ENCODE measurements at regions of chr7 and their contacts with region 1.

Region 1: DNA sequence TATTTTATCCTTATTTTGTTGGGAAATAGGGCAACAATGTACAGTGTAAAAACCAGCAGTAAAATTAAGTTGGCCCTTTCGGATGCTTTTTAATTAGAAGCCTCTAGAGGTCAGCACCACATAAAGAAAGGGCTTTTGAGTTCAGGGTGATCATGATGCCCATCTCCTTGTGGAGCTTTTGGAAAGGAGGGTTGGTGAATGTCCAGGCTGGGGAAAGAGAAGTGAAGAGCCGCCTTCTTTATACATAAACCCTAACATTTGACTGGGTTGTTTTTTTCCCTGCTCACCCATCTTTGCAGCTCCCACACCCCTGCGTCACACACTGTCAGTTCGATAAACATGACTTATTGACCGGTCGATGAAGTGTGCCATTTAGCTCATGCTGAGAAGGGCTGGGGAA is 29.8 kb downstream of the MTURN start:
- DNase-seq: no peak
- ATAC-seq: peak; percentile 47 to 71 (median 62)
- H3K4me3 ChIP-seq: no peak overlapping the region
- H3K27ac ChIP-seq: no peak overlapping the region
- H3K4me1 ChIP-seq: peaks cover 0 to 74% (median 18%) of the 10 kb centered on the region in 12 donors
- H3K27me3 ChIP-seq: no peaks in the 10 kb centered on the region
- CTCF ChIP-seq: peak; percentile 33 to 76 (median 62)
- POLR2A ChIP-seq: no peak

Region 2: DNA sequence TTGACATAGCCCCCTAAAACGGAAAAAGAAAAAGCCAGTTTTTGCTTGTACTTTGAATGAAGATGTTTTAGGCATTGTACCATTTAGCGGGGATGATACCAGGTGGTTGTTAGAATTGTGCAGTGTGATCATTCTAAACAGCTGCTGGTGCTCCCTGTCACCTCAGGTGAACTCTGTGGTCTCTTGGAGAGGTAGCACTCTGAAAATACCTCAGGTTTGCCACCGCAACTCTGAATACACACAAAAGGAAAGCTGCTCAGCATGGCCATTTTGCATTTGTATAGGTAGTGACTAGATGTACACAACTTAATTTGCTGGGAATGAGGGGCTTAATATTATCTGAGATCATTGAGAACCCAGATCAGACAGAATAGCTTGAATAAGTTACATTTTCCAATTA is 83.7 kb before region 1 on chr7:
- intact Hi-C with region 1: no loop called
- DNase-seq: no peak
- ATAC-seq: no peak
- H3K4me3 ChIP-seq: no peak overlapping the region
- H3K27ac ChIP-seq: no peak overlapping the region
- H3K4me1 ChIP-seq: no peaks in the 10 kb centered on the region
- H3K27me3 ChIP-seq: no peaks in the 10 kb centered on the region
- CTCF ChIP-seq: no peak
- POLR2A ChIP-seq: no peak

Region 3: GRCh38 chr7:30252885-30253795 is 88.6 kb after region 1 on chr7:
- intact Hi-C with region 1: loop called in 1 of 10 experiments (anchors 2 kb)
- DNase-seq: peak; percentile 68 to 82 (median 74)
- ATAC-seq: peak; percentile 88 to 96 (median 92)
- H3K4me3 ChIP-seq: no peak overlapping the region
- H3K27ac ChIP-seq: peak overlapping the region in 7 of 12 donors; percentile 54 to 82 (median 74)
- H3K4me1 ChIP-seq: peaks cover 0 to 60% (median 20%) of the 10 kb centered on the region in 12 donors
- H3K27me3 ChIP-seq: no peaks in the 10 kb centered on the region
- CTCF ChIP-seq: no peak
- POLR2A ChIP-seq: no peak

Region 4: DNA sequence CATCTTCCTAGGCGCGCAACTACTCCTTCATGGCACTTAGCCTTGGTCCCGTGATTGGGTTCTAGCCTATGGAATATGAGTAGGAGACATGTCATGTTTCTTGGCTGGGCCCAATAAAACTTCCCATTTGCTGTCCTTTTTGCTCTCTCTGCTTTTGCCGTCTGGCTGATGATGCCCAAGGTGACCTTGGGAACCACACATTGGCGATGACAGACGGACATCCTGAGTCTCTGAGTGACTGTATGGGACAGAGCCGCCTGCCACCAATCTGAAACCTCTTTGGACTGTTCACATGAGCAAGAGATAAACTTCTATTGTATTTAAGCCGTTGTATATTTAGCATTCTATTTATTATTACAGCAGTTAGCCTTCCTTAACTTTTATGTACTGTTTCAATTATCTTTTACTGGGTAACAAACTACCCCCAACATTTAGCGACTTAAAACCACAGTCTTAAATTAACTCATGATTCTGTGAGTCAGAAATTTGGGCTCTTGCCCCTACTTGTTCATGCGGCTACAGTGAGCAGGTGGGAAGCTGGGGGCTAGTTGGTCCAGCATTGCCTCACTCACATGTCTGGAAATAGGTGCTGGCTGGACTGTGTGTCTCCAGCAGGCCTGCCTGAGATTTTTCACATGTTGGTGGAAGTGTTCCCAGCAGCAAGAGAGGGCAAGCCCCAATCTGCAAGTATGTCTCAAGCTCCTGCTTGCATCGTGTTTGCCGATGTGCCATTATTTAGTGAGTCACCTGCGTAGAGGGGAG is 242.3 kb after region 1 on chr7:
- intact Hi-C with region 1: loop called (anchors 2 to 10 kb)
- DNase-seq: peak in 1 of 5 donors; percentile 38
- ATAC-seq: peak; percentile 70 to 81 (median 75)
- H3K4me3 ChIP-seq: no peak overlapping the region
- H3K27ac ChIP-seq: peak overlapping the region in 4 of 12 donors; percentile 10 to 56 (median 35)
- H3K4me1 ChIP-seq: peaks cover 0 to 6% (median 0%) of the 10 kb centered on the region in 12 donors
- H3K27me3 ChIP-seq: no peaks in the 10 kb centered on the region
- CTCF ChIP-seq: no peak
- POLR2A ChIP-seq: no peak

Region 5: DNA sequence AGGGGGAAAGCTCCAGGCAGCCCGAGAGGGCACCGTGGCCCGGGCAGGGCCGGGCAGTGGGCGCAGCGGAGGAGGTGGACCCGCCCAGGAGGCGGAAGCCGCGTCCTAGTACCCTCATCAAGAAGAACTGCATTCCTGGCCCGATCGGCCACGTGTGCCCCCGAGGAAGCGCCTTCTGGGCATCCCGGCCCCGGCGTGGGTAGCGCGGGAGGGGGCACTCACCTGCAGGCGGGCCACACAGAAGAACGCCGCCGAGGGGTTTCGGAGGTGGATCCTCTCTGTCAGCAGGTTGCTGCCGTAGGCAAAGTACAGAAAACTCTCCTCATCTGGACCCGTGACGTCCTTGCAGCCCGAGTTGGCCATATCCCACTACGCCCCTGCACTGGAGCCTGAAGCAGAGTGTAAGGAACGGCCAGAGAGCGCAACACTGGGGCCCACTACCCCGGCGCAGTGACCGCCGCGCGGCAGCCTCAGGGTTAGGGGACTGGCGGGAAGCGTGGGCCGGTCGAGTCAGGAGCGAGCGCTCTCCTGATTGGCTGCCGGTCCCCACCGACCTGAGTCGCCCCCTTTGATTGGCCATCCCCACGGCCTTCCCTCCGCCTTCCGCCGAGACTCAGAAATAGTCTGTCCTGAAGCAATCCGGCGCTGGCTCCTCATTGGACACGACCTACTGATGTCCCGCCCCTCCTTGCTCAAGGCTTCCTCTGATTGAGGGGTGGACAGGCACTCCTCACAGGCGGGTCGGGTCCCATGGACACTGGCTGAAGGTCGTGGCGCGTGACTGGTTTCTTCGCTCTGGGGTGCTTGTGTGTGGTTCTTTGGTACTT is 340.0 kb after region 1 on chr7 and contains the start of gene GGCT:
- intact Hi-C with region 1: loop called in 1 of 10 experiments (anchors 10 kb)
- DNase-seq: peak; percentile 98 to 100 (median 99)
- ATAC-seq: peak; percentile 99 to 100 (median 100)
- H3K4me3 ChIP-seq: peak within 1 kb of the TSS; percentile 62 to 99 (median 80)
- H3K27ac ChIP-seq: peak within 1 kb of the TSS; percentile 69 to 94 (median 88)
- H3K4me1 ChIP-seq: peaks cover 0 to 31% (median 12%) of the 10 kb centered on the region in 12 donors
- H3K27me3 ChIP-seq: no peaks in the 10 kb centered on the region
- CTCF ChIP-seq: no peak
- POLR2A ChIP-seq: peak in 1 of 2 donors; percentile 79
- total RNA-seq, gene GGCT: 14.1 to 23.6 (median 17.8) TPM

Measured in heart left ventricle (tissue), 16 donors.